ENCODE measurements at regions of chr13 and their contacts with region 1.

Region 1: GRCh38 chr13:51993713-51994112 is 17.5 kb downstream of the ATP7B start:
- DNase-seq: no peak
- CTCF ChIP-seq: no peak

Region 2: GRCh38 chr13:51976423-51976822 is 17.3 kb before region 1 on chr13:
- CTCF ChIA-PET with region 1: interaction called, 10 read pairs
- POLR2A ChIA-PET with region 1: no interaction called
- DNase-seq: no peak
- CTCF ChIP-seq: no peak

Measured in GM10248 (cell line).